Heart right ventricle (tissue), 16 donors: ENCODE measurements at regions of chr3 and their contacts with region 1.

Region 1: GRCh38 chr3:99023590-99024192 is 122.2 kb upstream of the DCBLD2 start:
- DNase-seq: no peak
- ATAC-seq: no peak
- H3K4me3 ChIP-seq: no peak overlapping the region
- H3K27ac ChIP-seq: no peak overlapping the region
- H3K4me1 ChIP-seq: no peaks in the 10 kb centered on the region
- H3K27me3 ChIP-seq: no peaks in the 10 kb centered on the region
- CTCF ChIP-seq: peak; percentile 29 to 77 (median 66)

Region 2: GRCh38 chr3:99167071-99167470 is 143.4 kb after region 1 on chr3:
- intact Hi-C with region 1: loop called in 8 of 10 experiments (anchors 5 to 10 kb)
- DNase-seq: no peak
- ATAC-seq: no peak
- H3K4me3 ChIP-seq: no peak overlapping the region
- H3K27ac ChIP-seq: no peak overlapping the region
- H3K4me1 ChIP-seq: no peaks in the 10 kb centered on the region
- H3K27me3 ChIP-seq: no peaks in the 10 kb centered on the region
- CTCF ChIP-seq: no peak

Region 3: GRCh38 chr3:99172736-99173657 is 149.3 kb after region 1 on chr3:
- intact Hi-C with region 1: loop called in 8 of 10 experiments (anchors 5 to 10 kb)
- DNase-seq: peak in 1 of 2 donors; percentile 23
- ATAC-seq: peak in 4 of 8 donors; percentile 25 to 58 (median 40)
- H3K4me3 ChIP-seq: no peak overlapping the region
- H3K27ac ChIP-seq: no peak overlapping the region
- H3K4me1 ChIP-seq: no peaks in the 10 kb centered on the region
- H3K27me3 ChIP-seq: no peaks in the 10 kb centered on the region
- CTCF ChIP-seq: peak; percentile 12 to 71 (median 62)

Region 4: DNA sequence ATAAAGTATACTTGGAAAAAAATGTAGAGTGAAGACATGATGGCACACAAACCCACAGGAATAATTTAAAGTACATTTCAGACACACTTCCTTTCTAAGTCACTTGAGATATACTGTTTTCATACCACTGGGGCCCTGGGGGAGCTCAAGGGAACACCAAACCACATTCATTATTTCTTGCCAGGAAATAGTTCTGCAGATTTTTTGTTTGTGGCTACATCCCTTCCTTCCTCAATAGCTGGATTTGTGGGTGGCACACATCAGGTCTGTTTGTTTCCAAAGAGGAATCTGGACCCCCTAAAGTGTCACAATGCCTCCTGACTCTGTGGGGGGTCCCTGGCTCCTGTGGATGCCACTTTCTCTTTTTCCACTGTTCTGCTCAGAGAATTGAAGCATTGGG is 461.2 kb after region 1 on chr3:
- intact Hi-C with region 1: loop called in 1 of 10 experiments (anchors 10 kb)
- DNase-seq: no peak
- ATAC-seq: no peak
- H3K4me3 ChIP-seq: no peak overlapping the region
- H3K27ac ChIP-seq: no peak overlapping the region
- H3K4me1 ChIP-seq: peaks cover 0 to 6% (median 0%) of the 10 kb centered on the region in 9 donors
- H3K27me3 ChIP-seq: no peaks in the 10 kb centered on the region
- CTCF ChIP-seq: no peak

Region 5: DNA sequence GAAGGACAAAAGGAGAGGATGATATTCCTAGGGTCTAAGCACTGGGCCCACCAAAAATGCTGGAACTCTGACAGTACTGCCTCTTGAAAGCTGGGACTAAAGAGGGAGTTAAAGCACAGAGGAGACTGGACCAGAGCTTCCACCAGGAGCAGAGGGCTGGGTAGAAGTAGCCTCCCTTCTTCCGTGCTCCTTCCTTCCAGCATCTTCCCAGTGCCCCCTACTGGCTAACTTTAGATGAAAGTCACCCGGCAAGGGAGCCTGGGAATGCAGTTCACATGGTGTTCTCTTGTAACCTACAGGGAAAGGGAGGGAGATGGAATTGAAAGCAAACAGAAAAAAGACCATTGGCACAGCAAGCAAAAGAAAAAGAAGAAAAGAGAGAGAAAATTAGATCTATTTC is 508.6 kb after region 1 on chr3:
- intact Hi-C with region 1: loop called in 1 of 10 experiments (anchors 10 kb)
- DNase-seq: peak in 1 of 2 donors; percentile 23
- ATAC-seq: peak in 5 of 8 donors; percentile 67 to 77 (median 71)
- H3K4me3 ChIP-seq: no peak overlapping the region
- H3K27ac ChIP-seq: no peak overlapping the region
- H3K4me1 ChIP-seq: peaks cover 0 to 6% (median 0%) of the 10 kb centered on the region in 9 donors
- H3K27me3 ChIP-seq: peaks cover 0 to 3% (median 0%) of the 10 kb centered on the region in 7 donors
- CTCF ChIP-seq: peak in 8 of 9 donors; percentile 42 to 66 (median 54)

Region 6: GRCh38 chr3:99808151-99808794 is 784.6 kb after region 1 on chr3:
- intact Hi-C with region 1: loop called in 1 of 10 experiments (anchors 5 kb)
- DNase-seq: peak in 1 of 2 donors; percentile 39
- ATAC-seq: peak; percentile 10 to 60 (median 54)
- H3K4me3 ChIP-seq: no peak overlapping the region
- H3K27ac ChIP-seq: no peak overlapping the region
- H3K4me1 ChIP-seq: peaks cover 0 to 3% (median 0%) of the 10 kb centered on the region in 9 donors
- H3K27me3 ChIP-seq: no peaks in the 10 kb centered on the region
- CTCF ChIP-seq: peak; percentile 60 to 87 (median 80)